ENCODE measurements at regions of chr5 and their contacts with region 1.

Region 1: DNA sequence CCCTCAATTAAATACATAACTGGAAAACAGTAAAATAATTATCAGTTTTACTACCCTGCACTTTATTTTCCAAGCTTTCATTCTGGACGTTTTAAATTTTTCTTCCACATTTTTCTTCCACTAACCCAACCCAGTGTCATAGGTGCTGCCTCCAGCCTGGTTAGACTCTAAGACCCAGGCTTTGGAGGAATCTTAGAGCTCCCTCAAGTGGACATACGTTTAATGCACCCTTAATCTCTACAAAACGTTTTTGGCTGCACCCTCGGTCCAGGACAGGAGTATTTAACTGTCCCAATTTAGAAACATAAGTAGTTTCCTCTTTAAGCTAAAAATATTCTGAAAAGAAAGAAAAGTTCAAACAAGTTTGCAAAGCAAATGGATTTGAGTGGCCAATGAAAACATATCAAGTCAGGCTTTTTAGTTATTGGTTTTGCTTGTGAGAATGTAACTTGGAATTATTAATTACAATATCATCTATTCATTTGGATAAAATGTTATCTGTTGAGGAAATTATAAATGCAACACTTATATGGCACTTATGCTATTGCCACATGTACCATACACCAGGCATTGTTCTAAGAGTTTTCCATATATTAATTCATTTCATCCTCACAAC is 38.9 kb downstream of the CDH6 start:
- DNase-seq: no peak
- ATAC-seq: peak; percentile 91

Region 2: GRCh38 chr5:29588276-29588675 is 1644.1 kb before region 1 on chr5:
- intact Hi-C with region 1: no loop called
- DNase-seq: no peak
- ATAC-seq: no peak

Region 3: DNA sequence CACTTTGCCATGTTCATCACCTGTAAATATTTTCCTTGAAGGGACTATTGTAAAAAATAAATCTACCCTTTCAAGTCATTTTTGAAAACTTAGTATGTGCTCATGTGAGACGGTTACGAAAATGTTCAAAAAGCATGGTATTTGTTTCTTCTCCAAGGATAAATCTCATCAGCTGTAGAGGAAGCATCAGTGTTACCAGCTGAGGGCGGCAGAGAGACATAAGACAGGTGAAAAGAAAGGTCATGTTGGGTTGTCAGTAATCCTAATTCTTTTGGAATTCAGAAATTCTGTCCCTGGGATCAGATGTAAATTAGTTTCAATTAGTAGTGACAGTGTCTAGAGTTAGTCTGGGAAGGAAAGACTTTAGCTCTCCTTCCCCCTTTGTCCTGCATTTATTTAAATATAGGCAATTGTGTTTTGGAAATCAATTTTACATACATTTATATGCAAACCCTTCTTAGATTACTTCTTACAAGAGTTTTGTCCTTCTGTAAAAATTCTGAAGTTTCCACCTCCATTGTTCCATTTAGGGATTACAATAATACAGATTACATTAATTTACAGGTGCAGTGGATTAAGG is 830.8 kb before region 1 on chr5:
- intact Hi-C with region 1: loop called (anchors 10 kb)
- DNase-seq: no peak
- ATAC-seq: no peak

Region 4: DNA sequence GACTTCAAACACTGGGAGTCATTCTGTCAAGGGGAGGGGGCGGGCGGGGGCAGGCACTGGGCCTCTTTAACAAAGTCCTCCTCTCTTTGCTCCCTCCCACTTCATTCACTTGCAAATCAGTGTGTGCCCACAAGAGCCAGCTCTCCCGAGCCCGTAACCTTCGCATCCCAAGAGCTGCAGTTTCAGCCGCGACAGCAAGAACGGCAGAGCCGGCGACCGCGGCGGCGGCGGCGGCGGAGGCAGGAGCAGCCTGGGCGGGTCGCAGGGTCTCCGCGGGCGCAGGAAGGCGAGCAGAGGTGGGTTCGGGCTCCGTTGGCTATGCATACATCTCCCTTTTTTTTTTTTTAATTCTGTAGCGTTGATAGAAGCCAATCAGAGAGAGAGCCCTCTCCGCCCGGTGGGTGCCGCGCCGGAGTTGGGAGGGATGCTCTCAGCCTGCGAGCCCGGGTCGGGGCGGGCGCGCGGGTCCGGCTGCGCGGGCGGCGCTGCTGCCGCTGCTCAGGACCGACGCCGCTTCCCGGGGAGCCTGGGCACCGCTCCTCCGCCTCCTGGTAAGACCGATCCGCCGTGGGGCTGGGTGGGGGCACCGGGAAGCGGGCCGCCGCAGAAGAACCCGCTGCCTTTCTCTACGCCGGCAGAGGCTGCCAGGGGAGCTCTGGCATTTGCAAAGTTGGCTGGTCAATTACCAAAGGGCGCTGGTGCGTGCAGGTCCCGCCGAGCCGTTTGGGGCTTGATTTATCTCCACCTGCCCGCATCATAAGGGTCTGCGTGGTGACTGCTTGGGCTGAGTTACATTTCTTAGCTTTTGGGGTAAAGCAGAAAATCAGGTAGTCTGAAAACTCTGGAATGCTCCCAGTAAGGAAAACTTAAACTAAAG is 38.6 kb before region 1 on chr5 and contains the start of gene CDH6:
- intact Hi-C with region 1: loop called (anchors 5 kb)
- DNase-seq: no peak
- ATAC-seq: peak; percentile 72
- total RNA-seq, gene CDH6: 3.3 TPM

Measured in Right ventricle myocardium inferior (tissue), 1 donor.